H1 (cell line): ENCODE measurements at regions of chr5 and their contacts with region 1.

Region 1: DNA sequence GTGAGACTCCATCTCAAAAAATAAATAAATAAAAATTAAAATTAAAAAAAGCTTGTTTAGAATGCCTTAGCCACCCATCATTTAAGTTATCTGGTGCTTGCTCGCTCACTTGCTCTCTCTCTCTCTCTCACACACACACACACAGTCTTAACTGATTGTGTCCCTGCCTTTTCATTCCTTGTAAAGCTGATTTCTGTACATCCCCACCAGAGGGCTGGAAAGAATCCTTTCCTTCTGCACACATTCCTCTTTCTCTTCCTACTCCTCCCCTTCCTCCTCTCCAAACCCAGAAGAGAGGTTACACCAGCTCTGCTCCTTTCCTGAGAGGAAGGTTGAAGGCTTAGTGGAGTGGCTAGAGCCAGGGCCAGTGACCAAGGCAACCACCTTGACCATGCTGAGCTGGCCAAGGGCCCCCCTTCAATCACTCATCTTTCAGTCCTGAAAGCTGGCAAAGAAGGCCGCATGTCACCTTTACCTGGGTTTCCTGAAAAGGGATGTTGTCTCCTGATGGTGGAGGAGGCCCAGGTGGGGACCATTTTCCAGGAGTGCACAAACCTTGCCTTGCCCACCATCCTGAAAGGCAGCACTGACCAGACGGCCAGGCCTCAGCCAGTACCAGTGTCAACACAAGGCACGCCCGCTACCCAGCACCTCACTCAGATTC is 25.6 kb downstream of the STK10 start:
- DNase-seq: no peak
- H3K4me3 ChIP-seq: no peak overlapping the region
- H3K27ac ChIP-seq: no peak overlapping the region
- H3K4me1 ChIP-seq: no peaks in the 10 kb centered on the region; a peak in 1 of 7 replicates
- H3K27me3 ChIP-seq: no peaks in the 10 kb centered on the region
- CTCF ChIP-seq: no peak
- EP300 ChIP-seq: no peak
- POLR2A ChIP-seq: no peak
- RAD21 ChIP-seq: no peak

Region 2: GRCh38 chr5:172179361-172179989 is 17.0 kb after region 1 on chr5:
- CTCF ChIA-PET with region 1: interaction called, 42 read pairs
- POLR2A ChIA-PET with region 1: interaction called, 6 read pairs
- DNase-seq: no peak
- H3K4me3 ChIP-seq: no peak overlapping the region
- H3K27ac ChIP-seq: no peak overlapping the region
- H3K4me1 ChIP-seq: peaks cover 0 to 20% (median 6%) of the 10 kb centered on the region in 4 experiments; a peak in 4 of 7 replicates
- H3K27me3 ChIP-seq: no peaks in the 10 kb centered on the region
- CTCF ChIP-seq: no peak
- EP300 ChIP-seq: no peak
- POLR2A ChIP-seq: no peak
- RAD21 ChIP-seq: no peak